Cardiac septum (tissue), 1 donor: ENCODE measurements at regions of chr3 and their contacts with region 1.

Region 1: DNA sequence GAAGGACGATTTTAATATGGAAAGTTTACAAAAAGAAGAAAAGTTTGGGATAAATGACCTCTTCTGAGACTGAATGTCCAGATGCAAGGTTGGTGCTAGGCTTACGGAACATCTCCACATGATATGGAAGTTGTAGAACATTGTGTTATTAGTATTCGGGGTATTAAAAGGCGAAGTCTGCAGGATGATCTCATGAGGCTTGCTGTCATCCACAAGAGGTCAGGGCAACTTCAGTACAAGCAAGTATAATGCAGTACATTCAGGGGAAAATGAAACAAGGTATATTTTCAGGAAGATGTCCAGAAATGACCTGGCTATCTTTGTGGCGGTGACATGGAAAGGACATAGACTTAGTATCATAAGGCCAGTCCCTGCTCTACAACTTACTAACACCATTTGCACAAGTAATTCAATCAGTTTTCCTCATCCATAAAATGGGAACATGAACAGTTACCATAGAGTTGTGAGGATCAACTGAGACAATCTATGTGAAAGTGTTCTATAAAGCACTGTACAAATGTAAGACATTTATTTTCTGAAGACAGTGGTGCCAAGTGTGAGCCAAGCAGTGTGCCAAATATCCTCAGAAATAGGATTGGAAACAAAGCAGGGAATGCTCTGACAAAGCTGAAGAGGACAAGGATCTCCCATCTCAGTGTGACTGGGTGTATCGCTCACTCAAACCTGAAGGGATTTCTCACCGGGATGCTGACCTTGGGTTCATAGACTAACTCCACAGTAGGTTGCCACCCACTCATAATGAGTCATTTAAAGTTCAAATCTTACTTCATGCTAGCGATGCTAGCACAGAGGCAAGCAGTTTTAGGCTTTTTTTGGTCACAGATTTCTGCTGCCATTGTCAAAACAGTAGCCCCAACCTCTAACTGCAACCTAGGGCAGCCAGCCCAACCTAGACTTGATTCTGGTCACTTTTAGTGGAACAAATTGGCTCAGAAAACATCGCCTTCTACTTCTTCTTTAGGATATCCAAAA is 118.3 kb downstream of the TIGIT start:
- DNase-seq: no peak

Region 2: DNA sequence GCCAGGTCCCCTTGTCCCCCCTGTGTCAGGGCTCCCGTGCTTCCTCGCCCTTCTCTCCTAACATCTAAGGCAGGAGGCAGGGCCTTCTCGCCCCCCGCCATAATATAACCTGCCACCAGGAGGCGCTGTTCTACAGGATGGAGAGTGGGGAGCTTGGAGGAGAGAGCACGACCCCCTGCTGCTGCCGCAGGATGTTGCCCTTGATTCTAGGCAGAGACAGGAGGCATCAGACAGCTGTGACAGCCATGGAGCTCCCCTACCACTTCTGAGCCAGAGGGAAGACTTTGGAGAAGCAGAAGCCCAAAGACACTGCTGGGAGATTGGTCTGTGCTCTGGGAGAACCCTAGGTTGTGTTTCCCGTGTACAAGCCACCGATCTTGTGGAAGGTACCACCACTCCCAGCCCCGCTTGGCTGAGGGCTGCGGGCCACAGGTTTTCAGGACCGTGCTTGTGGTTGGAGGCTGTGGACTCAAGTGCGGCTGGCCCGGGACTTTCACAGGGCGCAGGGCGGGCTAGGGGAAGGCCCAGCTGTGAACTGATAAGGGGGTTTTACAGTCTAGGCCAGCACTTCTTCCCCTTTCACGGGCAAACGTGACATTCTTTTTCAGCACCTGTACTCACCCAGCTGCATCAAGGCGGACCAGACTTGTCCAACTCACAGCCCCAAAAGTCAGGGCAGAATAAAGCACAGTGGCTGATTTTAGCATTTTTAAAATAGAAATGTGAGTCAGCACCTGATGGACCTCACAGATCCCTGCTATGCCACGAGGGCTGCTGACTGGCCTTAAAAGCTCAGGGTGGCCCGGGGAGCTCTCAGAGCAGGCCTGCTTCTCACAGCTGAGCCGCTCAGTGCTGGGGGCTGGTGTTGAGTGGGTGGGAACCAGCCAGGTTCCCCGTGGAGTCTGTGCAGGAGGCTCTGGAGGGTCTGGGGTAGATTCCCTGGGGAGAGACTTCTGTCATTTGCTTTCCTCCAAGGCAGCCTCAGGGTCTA is 120.9 kb before region 1 on chr3:
- intact Hi-C with region 1: no loop called
- DNase-seq: peak; percentile 80

Region 3: GRCh38 chr3:114454551-114455251 is 42.6 kb after region 1 on chr3:
- intact Hi-C with region 1: loop called (anchors 5 kb)
- DNase-seq: no peak